Panc1 (cell line): ENCODE measurements at regions of chr1 and their contacts with region 1.

Region 1: DNA sequence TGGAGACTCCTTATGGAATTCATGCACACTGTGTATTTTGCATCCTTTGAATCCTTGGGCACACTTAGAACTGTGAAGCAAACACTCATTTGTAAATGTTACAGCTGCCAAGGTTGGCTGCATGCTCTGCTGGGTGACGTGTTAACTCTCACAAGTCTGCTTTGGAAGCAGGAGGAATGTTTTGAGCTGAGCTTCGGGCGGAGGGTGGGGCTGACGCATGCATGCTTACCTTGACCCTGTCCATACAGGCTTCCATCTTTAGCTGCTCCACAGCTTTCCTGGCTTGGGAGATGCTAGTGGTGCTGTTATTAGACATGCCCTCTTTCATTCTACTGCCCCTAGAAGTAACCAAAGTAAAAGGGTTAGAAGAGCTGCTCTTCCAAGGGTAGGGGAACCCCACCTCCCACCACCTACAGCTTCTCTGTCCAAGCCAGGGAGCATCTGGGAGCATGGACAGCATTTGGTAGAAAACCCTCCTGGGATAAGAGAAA is 66.0 kb downstream of the GNG4 start:
- DNase-seq: no peak
- ATAC-seq: peak; percentile 71; the same call in 1 of the 2 replicates
- H3K4me3 ChIP-seq: no peak overlapping the region
- H3K27ac ChIP-seq: no peak overlapping the region
- H3K4me1 ChIP-seq: no peaks in the 10 kb centered on the region
- H3K27me3 ChIP-seq: peaks cover 7% of the 10 kb centered on the region; the same call in 1 of the 2 replicates
- CTCF ChIP-seq: no peak; the same call in 1 of the 2 replicates

Region 2: DNA sequence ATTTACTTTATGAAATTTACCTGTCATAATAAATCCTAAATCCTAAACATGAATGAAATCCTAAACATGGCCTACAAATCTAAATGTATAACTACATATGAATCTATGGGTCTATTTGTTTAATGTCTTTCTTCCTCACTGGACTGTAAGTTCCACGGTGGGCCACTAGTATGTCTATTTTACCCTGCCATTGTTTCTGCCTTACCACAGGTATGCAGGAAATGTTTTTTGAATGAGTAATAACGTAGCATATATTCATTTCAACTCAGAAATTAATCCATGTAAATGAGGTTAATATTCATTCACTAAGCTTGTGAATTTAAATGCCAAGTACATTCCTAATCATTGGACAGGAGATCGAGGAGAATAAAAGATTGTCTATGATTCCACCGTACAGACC is 114.6 kb before region 1 on chr1:
- CTCF ChIA-PET with region 1: interaction called, 11 read pairs
- POLR2A ChIA-PET with region 1: no interaction called
- in situ Hi-C with region 1: no loop called
- intact Hi-C with region 1: no loop called
- DNase-seq: peak; percentile 50
- ATAC-seq: peak; percentile 83
- H3K4me3 ChIP-seq: no peak overlapping the region
- H3K27ac ChIP-seq: no peak overlapping the region
- H3K4me1 ChIP-seq: peaks cover 6% of the 10 kb centered on the region; the same call in 1 of the 2 replicates
- H3K27me3 ChIP-seq: no peaks in the 10 kb centered on the region
- CTCF ChIP-seq: no peak

Region 3: DNA sequence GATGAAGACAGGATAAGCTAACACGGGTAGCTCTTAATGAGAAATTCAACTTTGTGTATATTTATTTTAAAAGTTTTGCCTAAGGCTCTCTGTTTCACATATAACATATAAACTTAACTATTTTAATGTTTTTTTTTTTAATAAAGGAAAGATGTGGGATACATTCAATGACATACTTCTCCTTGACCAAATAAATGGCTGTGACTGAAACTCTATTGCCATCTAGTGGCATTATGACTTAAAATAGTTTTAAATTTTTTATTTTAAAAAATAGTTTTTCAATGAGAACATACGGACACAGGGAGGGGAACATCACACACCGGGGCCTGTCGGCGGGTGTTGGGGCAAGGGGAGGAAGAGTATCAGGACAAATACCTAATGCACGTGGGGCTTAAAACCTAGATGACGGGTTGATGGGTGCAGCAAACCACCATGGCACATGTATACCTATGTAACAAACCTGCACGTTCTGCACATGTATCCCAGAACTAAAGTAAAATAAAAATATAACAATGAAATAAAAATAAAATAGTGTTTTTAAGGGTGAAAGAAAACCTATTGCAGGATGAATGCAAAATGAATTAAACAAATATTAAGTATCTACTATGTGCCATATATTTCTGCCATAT is 199.7 kb after region 1 on chr1:
- CTCF ChIA-PET with region 1: no interaction called
- POLR2A ChIA-PET with region 1: no interaction called
- in situ Hi-C with region 1: no loop called
- intact Hi-C with region 1: no loop called
- DNase-seq: no peak
- ATAC-seq: peak; percentile 42; the same call in 1 of the 2 replicates
- H3K4me3 ChIP-seq: no peak overlapping the region
- H3K27ac ChIP-seq: no peak overlapping the region
- H3K4me1 ChIP-seq: no peaks in the 10 kb centered on the region
- H3K27me3 ChIP-seq: no peaks in the 10 kb centered on the region
- CTCF ChIP-seq: peak; percentile 73

Region 4: GRCh38 chr1:235960809-235961208 is 377.3 kb after region 1 on chr1:
- CTCF ChIA-PET with region 1: no interaction called
- POLR2A ChIA-PET with region 1: no interaction called
- in situ Hi-C with region 1: no loop called
- intact Hi-C with region 1: no loop called
- DNase-seq: no peak
- ATAC-seq: no peak
- H3K4me3 ChIP-seq: no peak overlapping the region
- H3K27ac ChIP-seq: no peak overlapping the region
- H3K4me1 ChIP-seq: no peaks in the 10 kb centered on the region
- H3K27me3 ChIP-seq: no peaks in the 10 kb centered on the region
- CTCF ChIP-seq: no peak